Thyroid gland (tissue), 4 donors: ENCODE measurements at regions of chr19 and their contacts with region 1.

Region 1: DNA sequence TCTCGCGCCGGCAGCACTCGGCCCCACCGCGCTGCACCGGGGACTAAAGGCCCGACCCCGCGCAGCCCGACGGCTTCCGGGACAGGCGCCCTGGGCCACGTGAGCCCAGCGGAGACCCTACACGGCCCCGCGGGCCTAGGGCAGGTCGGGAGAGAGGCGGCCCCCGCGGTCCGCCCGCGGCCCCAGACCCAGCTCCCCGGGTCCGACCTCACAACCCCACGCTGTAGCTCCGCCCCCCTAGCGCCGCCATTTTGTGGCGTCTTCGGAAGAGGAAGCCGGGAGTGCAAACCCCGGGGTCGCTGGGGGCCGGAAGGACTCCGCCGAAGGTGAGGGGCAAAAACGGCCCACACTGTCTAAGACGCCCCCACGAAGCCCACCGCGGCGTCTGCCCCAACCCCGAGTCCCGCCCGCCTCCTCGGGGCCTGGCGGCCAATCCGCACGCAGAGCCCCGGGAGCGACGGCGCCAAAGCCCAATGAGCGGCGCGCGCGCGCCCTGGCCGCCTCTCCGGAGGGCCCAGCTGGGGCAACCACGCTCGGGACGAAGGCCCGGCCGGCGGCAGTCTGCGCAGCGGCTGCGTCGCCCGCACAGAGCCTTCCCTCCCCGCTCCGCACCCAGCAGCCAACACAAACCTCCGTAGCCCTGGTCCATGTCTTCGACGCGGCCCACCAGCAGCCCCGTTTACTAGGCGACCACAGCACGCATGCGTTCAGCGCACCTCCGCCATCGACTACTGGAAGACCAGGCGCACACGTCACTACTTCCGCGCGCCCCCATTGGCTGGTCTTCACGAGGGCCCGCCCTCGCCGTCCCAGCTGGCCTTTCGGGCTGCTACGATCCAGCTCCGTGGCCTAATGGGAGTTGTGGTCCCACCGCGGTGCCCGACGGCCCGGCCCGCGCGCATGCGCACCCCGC is at the start of gene AKAP8:
- DNase-seq: peak; percentile 99
- H3K4me3 ChIP-seq: peak within 1 kb of the TSS; percentile 54 to 88 (median 70)
- H3K27ac ChIP-seq: peak within 1 kb of the TSS; percentile 89 to 98 (median 97)
- H3K4me1 ChIP-seq: peaks cover 21 to 46% of the 10 kb centered on the region in 2 donors
- H3K27me3 ChIP-seq: no peaks in the 10 kb centered on the region
- CTCF ChIP-seq: no peak
- POLR2A ChIP-seq: peak; percentile 38 to 82
- total RNA-seq, gene AKAP8: 21.8 to 33.2 (median 26.6) TPM

Region 2: GRCh38 chr19:15418588-15419412 is 39.5 kb after region 1 on chr19 and contains the start of gene AKAP8L:
- intact Hi-C with region 1: loop called (anchors 5 kb)
- DNase-seq: peak; percentile 99 to 100
- H3K4me3 ChIP-seq: peak within 1 kb of the TSS; percentile 33 to 99 (median 56)
- H3K27ac ChIP-seq: peak within 1 kb of the TSS; percentile 82 to 92 (median 90)
- H3K4me1 ChIP-seq: peaks cover 31 to 40% of the 10 kb centered on the region in 2 donors
- H3K27me3 ChIP-seq: no peaks in the 10 kb centered on the region
- CTCF ChIP-seq: peak in 4 of 6 experiments; percentile 47 to 66 (median 54)
- POLR2A ChIP-seq: peak; percentile 54 to 93
- total RNA-seq, gene AKAP8L: 122 to 272 (median 204) TPM

Region 3: GRCh38 chr19:15544283-15544682 is 164.9 kb after region 1 on chr19:
- intact Hi-C with region 1: no loop called
- DNase-seq: no peak
- H3K4me3 ChIP-seq: no peak overlapping the region
- H3K27ac ChIP-seq: no peak overlapping the region
- H3K4me1 ChIP-seq: no peaks in the 10 kb centered on the region
- H3K27me3 ChIP-seq: no peaks in the 10 kb centered on the region
- CTCF ChIP-seq: no peak
- POLR2A ChIP-seq: no peak